ENCODE measurements at regions of chr3 and their contacts with region 1.

Region 1: GRCh38 chr3:156816800-156817645 is 9.1 kb upstream of the LEKR1 start:
- DNase-seq: peak; percentile 83 to 87
- ATAC-seq: peak; percentile 81 to 85
- H3K4me3 ChIP-seq: peak overlapping the region; percentile 63 to 98 (median 68)
- H3K27ac ChIP-seq: peak overlapping the region; percentile 84 to 90 (median 88)
- H3K4me1 ChIP-seq: peaks cover 21 to 24% of the 10 kb centered on the region in 2 donors
- H3K27me3 ChIP-seq: no peaks in the 10 kb centered on the region
- CTCF ChIP-seq: peak in 2 of 5 experiments; percentile 6 to 16
- POLR2A ChIP-seq: peak; percentile 65 to 73

Region 2: DNA sequence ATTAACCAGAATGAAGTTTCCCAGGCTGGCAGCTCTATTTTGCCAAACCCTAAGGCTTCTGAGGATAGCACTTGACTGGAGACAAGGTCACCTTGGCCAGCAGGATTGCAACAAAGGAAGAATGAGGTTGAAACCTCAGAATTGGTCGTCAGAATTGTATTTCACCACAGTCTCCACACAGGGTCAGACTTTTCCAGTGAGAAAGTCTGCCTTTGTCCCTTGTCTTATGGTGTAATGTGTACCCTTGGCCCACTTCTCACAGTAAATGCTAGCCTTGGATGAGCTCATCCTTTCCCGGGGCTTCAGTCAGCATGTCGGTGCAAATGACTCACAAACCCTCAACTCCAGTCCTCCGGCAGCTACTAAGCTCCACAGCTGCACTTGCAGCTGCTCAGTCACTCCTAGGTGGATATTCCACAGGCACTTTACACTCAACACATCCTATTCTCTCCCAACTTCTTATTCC is 281.8 kb before region 1 on chr3:
- in situ Hi-C with region 1: loop called in 1 of 4 experiments (anchors 25 kb)
- intact Hi-C with region 1: no loop called
- DNase-seq: peak; percentile 51 to 66
- ATAC-seq: peak; percentile 96 to 98
- H3K4me3 ChIP-seq: no peak overlapping the region
- H3K27ac ChIP-seq: peak overlapping the region; percentile 45 to 65 (median 56)
- H3K4me1 ChIP-seq: peaks cover 0 to 7% of the 10 kb centered on the region in 2 donors
- H3K27me3 ChIP-seq: no peaks in the 10 kb centered on the region
- CTCF ChIP-seq: no peak
- POLR2A ChIP-seq: peak in 1 of 2 donors; percentile 34

Region 3: DNA sequence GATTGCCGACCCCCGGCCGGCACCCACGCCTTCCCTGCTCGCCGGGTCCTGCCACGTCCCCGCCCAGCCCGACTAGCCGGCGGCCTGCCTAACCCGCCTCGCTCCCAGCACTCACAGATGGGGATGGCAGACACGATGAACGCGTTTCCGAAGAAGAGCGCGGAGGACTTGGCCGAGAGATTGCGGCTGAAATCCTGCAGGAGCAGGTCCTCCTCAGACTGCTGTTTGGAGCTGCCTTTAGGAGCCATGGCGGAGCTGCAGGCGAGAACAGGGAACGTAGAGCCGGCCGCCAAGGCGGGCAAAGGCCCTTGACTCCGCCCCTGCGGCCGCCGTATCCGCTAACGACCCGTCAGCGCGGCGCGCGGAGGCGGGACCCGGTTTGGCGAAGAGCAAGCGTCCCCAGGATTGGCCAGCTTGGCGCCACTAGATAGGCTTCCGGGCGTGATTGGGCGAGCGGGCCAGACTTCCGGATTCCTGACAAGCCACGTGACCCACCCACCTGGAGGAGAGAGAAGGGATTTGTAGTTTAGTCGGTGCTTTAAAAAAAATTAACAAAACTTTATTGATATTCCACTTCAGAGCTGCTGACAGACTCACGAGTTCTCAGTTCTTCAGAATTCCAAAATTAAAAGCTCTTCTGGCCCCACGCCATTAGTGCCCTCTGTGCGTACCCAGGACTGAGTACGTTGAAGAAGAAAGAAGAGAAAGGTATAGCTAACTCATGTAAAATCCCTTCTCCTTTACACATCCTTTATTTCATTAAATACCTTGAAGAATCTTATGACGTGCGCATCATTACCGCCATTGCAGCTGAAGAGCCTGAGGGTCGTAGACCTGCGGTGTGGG is 262.0 kb before region 1 on chr3 and contains the start of gene SSR3:
- in situ Hi-C with region 1: loop called in 1 of 4 experiments (anchors 25 kb)
- intact Hi-C with region 1: loop called (anchors 5 kb)
- DNase-seq: peak; percentile 99
- ATAC-seq: peak; percentile 98
- H3K4me3 ChIP-seq: peak within 1 kb of the TSS; percentile 84 to 100 (median 88)
- H3K27ac ChIP-seq: peak within 1 kb of the TSS; percentile 85 to 97 (median 90)
- H3K4me1 ChIP-seq: peaks cover 22 to 27% of the 10 kb centered on the region in 2 donors
- H3K27me3 ChIP-seq: no peaks in the 10 kb centered on the region
- CTCF ChIP-seq: peak; percentile 34 to 65 (median 63)
- POLR2A ChIP-seq: peak; percentile 71 to 78
- total RNA-seq, gene SSR3: 50.9 to 91.5 (median 65.3) TPM

Region 4: GRCh38 chr3:157088601-157089454 is 271.8 kb after region 1 on chr3:
- in situ Hi-C with region 1: loop called in 2 of 4 experiments (anchors 10 kb)
- intact Hi-C with region 1: loop called (anchors 2 kb)
- DNase-seq: peak; percentile 94 to 96
- ATAC-seq: peak; percentile 79 to 80
- H3K4me3 ChIP-seq: peak overlapping the region; percentile 77 to 87 (median 82)
- H3K27ac ChIP-seq: peak overlapping the region; percentile 99 to 100 (median 100)
- H3K4me1 ChIP-seq: peaks cover 38 to 44% of the 10 kb centered on the region in 2 donors
- H3K27me3 ChIP-seq: no peaks in the 10 kb centered on the region
- CTCF ChIP-seq: peak in 2 of 5 experiments; percentile 23 to 29
- POLR2A ChIP-seq: peak; percentile 94 to 95

Region 5: DNA sequence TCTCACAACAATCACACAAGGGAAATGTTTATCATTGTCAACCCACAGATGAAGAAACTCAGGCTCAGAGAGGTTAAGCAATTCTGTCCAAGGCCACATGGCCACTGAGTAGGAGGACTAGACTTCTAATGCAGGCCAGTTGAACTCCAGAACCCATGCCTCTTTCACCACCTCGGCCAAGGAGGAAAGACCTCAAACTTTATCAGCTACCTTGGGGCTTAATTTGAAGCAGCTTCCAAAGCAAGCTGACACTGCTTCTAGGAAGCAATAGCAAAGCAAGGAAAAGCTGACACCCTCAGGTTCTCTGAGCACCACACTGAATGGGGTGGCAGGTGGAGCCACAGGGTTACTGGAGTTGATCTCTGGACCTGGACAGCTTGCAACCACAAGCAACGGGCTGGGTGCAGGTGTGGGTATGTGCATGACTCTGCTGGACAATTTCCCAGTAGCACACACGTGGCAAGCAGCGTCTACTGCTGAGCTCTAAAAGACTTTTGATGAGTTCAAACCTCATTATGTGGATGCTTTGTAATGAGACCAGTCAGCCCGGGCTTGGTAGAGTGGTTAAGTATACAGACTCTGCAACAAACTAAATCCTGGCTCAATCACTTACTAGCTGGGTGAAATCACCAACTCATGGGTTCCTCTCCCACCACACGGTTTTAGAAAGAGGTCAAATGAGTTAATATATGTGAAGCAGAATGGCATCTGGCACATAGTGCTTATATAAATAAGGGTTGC is 319.8 kb after region 1 on chr3:
- in situ Hi-C with region 1: no loop called
- intact Hi-C with region 1: loop called (anchors 2 kb)
- DNase-seq: peak; percentile 57 to 72
- ATAC-seq: peak; percentile 49 to 50
- H3K4me3 ChIP-seq: no peak overlapping the region
- H3K27ac ChIP-seq: peak overlapping the region; percentile 76 to 86 (median 82)
- H3K4me1 ChIP-seq: peaks cover 58 to 59% of the 10 kb centered on the region in 2 donors
- H3K27me3 ChIP-seq: no peaks in the 10 kb centered on the region
- CTCF ChIP-seq: no peak
- POLR2A ChIP-seq: no peak

Region 6: DNA sequence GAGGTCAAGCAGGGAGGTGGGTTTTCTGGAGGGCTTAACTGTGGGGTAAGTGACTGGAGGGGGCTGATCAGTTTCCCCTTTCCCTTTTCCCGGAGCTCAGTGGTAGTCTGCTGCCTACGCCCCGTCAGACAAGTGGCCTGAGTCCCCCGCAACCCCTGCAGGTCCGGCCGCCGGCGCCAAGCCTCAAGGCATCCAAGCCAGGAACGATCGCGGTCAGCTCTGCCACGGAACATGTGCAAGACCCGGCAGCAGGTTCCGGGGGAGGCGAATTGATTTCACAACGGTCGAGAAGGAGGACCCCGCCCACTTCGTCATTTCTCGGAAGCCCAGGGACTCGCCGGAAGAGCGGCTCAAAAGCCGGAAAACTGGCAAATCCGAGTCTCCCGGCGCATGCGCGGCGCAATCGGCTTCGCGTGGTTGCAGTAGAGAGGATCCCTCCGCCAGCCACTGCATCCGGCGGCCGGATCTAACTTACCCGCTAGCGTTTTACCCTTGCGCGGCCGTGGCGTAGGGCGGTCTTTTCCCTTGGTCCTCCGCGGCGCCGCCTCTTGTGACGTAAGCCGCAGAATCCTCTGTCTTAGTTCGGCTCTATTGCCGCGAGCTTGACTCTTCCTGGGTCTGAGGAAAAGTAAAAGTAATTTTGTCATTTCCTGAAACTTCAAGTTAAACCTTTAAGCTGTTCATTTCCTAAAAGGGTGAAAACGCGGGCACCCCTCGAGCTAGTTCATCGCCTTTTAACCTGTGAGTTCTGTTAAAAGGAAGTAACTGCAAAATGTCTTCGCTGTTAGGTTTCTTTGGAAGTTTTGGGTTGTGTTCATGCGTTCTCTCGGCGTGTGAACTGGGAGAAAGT is 357.9 kb after region 1 on chr3:
- in situ Hi-C with region 1: no loop called
- intact Hi-C with region 1: loop called (anchors 5 kb)
- DNase-seq: peak; percentile 99
- ATAC-seq: peak; percentile 97
- H3K4me3 ChIP-seq: peak overlapping the region; percentile 70 to 73 (median 72)
- H3K27ac ChIP-seq: peak overlapping the region; percentile 92 to 98 (median 95)
- H3K4me1 ChIP-seq: peaks cover 13 to 14% of the 10 kb centered on the region in 2 donors
- H3K27me3 ChIP-seq: no peaks in the 10 kb centered on the region
- CTCF ChIP-seq: peak in 1 of 5 experiments; percentile 43
- POLR2A ChIP-seq: peak; percentile 89 to 95